ENCODE measurements at regions of chr1 and their contacts with region 1.

Region 1: DNA sequence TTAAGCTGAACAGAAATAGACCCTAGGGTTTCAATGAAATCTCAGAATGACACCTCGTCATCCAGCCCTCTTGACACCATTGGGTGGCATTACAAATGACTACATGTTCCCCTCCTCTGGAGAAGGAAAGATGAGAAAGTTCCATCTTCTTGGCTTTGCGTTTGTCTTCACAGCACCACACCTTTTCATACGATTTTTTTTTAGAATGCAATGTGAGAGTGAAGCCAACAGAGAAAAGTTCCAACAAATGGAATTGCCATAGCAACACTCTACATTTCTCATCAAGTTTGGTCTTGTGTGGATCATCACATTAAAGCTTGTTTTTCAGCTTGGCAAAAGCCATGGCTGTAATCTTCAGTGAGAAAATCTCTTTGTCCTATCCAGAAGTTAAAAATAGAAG is 183.4 kb upstream of the SNX7 start:
- DNase-seq: no peak
- H3K4me3 ChIP-seq: no peak overlapping the region
- H3K27ac ChIP-seq: no peak overlapping the region
- H3K4me1 ChIP-seq: no peaks in the 10 kb centered on the region
- H3K27me3 ChIP-seq: no peaks in the 10 kb centered on the region
- CTCF ChIP-seq: no peak
- POLR2A ChIP-seq: no peak

Region 2: DNA sequence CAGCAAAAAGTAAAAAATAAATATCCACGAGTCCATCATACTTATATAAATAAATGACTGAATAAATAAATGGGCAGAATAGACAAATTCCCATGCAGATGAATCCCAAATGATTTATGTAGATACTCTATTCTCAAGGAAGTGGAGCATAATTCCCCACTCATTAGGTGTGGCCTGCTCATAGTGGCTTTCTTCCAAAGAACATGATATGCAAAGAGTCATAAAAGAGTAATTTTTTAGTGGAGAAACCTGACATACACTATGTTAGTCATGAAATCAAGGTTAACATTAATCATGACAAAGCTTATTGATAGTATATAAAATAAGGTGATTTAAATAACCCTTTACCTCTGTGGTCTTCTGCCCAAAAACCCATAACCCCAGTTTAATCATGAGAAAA is 856.2 kb before region 1 on chr1:
- intact Hi-C with region 1: no loop called
- DNase-seq: no peak
- H3K4me3 ChIP-seq: no peak overlapping the region
- H3K27ac ChIP-seq: no peak overlapping the region
- H3K4me1 ChIP-seq: no peaks in the 10 kb centered on the region
- H3K27me3 ChIP-seq: no peaks in the 10 kb centered on the region
- CTCF ChIP-seq: no peak
- POLR2A ChIP-seq: no peak

Region 3: GRCh38 chr1:98439471-98439870 is 38.6 kb before region 1 on chr1:
- intact Hi-C with region 1: loop called (anchors 2 kb)
- DNase-seq: no peak
- H3K4me3 ChIP-seq: no peak overlapping the region
- H3K27ac ChIP-seq: no peak overlapping the region
- H3K4me1 ChIP-seq: no peaks in the 10 kb centered on the region
- H3K27me3 ChIP-seq: no peaks in the 10 kb centered on the region
- CTCF ChIP-seq: no peak
- POLR2A ChIP-seq: no peak

Region 4: DNA sequence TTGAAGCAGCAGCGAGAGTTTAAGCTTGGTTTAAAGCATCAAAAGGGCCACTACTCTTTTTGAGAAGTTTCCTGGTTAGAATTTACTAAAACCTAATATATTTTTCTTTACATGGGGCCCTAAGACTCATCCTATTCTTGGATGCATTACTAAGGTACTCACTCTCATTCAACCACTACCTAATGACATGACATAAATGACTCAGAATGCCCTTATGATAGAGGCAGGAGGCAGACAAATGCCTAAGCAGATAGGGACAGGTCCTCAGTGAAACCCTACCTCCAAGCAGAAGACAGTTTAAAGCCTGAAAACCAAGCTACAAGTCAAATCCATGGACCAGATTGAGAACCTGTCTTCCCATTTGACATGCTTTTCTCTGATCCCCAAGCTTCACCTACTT is 1457.4 kb after region 1 on chr1:
- intact Hi-C with region 1: loop called (anchors 10 kb)
- DNase-seq: no peak
- H3K4me3 ChIP-seq: no peak overlapping the region
- H3K27ac ChIP-seq: no peak overlapping the region
- H3K4me1 ChIP-seq: no peaks in the 10 kb centered on the region
- H3K27me3 ChIP-seq: no peaks in the 10 kb centered on the region
- CTCF ChIP-seq: no peak
- POLR2A ChIP-seq: no peak

Measured in breast epithelium (tissue), 4 donors.